Heart left ventricle (tissue), 16 donors: ENCODE measurements at regions of chr3 and their contacts with region 1.

Region 1: DNA sequence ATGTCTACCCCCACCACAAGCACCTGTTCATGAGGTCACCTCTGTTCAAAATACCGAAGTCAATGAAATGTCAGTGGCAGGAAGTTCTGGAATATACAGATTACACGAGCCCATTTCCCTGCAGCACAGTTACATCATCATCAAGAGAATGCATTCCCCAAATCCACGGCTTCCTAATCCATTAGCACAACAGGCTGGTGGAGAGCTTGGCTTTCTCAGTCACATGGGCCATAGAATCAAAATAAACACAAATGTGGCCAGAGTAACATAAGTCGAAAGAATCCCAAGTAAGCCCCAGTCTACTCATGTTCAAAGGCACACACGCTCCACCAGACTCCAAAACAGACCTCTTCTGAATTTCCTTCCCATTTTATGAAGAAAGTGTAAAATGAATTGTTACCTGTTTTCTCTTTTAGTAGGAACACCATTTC is 419.3 kb downstream of the MAGI1 start:
- DNase-seq: no peak
- ATAC-seq: no peak
- H3K4me3 ChIP-seq: no peak overlapping the region
- H3K27ac ChIP-seq: peak overlapping the region in 4 of 12 donors; percentile 2 to 51 (median 10)
- H3K4me1 ChIP-seq: peaks cover 0 to 65% (median 13%) of the 10 kb centered on the region in 12 donors
- H3K27me3 ChIP-seq: no peaks in the 10 kb centered on the region
- CTCF ChIP-seq: no peak
- POLR2A ChIP-seq: no peak

Region 2: GRCh38 chr3:65561617-65562016 is 57.8 kb before region 1 on chr3:
- intact Hi-C with region 1: no loop called
- DNase-seq: no peak
- ATAC-seq: no peak
- H3K4me3 ChIP-seq: no peak overlapping the region
- H3K27ac ChIP-seq: no peak overlapping the region
- H3K4me1 ChIP-seq: peaks cover 0 to 68% (median 26%) of the 10 kb centered on the region in 12 donors
- H3K27me3 ChIP-seq: no peaks in the 10 kb centered on the region
- CTCF ChIP-seq: no peak
- POLR2A ChIP-seq: no peak

Region 3: GRCh38 chr3:65575373-65575840 is 44.1 kb before region 1 on chr3:
- intact Hi-C with region 1: loop called in 2 of 10 experiments (anchors 5 kb)
- DNase-seq: no peak
- ATAC-seq: no peak
- H3K4me3 ChIP-seq: no peak overlapping the region
- H3K27ac ChIP-seq: no peak overlapping the region
- H3K4me1 ChIP-seq: peaks cover 0 to 22% (median 3%) of the 10 kb centered on the region in 12 donors
- H3K27me3 ChIP-seq: no peaks in the 10 kb centered on the region
- CTCF ChIP-seq: no peak
- POLR2A ChIP-seq: no peak

Region 4: DNA sequence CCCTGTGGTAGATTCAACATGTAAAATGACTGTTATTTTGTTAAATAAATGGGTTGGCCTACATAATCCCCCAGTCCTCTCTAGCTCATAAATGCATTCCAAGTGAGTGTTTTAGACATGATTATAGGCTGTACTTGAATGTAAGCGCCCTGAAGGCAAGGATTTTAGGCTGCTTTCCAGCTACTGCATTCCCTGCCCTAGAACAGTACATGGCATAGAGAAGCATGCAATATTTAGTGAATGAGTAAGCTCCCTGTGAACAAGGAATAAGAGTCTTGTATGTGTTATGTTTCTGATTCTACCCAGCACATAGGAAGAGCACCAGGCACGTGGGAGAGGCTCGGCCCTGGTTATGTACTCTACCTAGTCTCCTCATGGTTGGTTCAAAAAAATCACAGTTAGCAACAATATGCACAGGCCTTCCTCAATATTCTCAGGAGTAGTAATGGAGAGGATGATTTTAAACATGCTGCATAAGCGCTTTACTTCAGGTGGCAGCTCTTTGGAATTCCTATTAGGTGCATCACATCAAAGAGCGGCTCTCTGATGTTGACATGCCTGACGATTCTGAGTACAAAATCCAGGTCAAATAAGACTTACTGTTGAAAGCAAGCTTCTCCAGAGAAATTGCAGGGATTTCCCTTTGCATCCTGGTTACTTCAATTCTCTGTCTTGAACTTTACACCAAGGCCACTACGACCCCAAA is 37.3 kb before region 1 on chr3:
- intact Hi-C with region 1: loop called in 2 of 10 experiments (anchors 5 kb)
- DNase-seq: no peak
- ATAC-seq: peak in 1 of 4 donors; percentile 18
- H3K4me3 ChIP-seq: no peak overlapping the region
- H3K27ac ChIP-seq: no peak overlapping the region
- H3K4me1 ChIP-seq: peaks cover 0 to 25% (median 11%) of the 10 kb centered on the region in 12 donors
- H3K27me3 ChIP-seq: no peaks in the 10 kb centered on the region
- CTCF ChIP-seq: no peak
- POLR2A ChIP-seq: no peak